Motor neuron (in vitro differentiated cells): ENCODE measurements at regions of chr17 and their contacts with region 1.

Region 1: GRCh38 chr17:61426013-61426730 is 26.1 kb upstream of the TBX4 start:
- ATAC-seq: peak in 3 of 8 experiments; percentile 37 to 69 (median 57)
- H3K4me3 ChIP-seq: no peak overlapping the region
- H3K27ac ChIP-seq: no peak overlapping the region
- H3K4me1 ChIP-seq: no peaks in the 10 kb centered on the region

Region 2: DNA sequence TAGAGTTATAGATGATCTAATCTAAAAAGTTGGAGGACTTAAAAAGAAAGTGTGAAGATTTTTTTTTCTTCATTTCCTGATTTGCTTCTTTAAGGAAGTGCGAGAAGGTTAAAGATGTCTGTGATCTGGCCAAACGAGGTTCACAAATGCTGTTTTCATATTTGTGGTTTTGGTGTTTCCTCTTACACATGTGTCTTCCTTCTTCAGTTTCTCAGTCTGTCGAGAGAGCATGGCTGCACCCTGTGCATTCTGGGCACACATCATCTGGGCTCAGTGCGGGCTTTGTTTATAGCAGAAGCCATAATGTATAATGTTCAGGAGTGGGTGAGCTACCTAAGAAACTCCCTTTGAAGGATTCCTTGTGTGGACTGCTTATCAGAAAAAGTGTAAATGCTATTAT is 287.0 kb before region 1 on chr17:
- in situ Hi-C with region 1: no loop called
- ATAC-seq: peak in 2 of 8 experiments; percentile 34 to 38
- H3K4me3 ChIP-seq: no peak overlapping the region
- H3K27ac ChIP-seq: no peak overlapping the region
- H3K4me1 ChIP-seq: no peaks in the 10 kb centered on the region

Region 3: DNA sequence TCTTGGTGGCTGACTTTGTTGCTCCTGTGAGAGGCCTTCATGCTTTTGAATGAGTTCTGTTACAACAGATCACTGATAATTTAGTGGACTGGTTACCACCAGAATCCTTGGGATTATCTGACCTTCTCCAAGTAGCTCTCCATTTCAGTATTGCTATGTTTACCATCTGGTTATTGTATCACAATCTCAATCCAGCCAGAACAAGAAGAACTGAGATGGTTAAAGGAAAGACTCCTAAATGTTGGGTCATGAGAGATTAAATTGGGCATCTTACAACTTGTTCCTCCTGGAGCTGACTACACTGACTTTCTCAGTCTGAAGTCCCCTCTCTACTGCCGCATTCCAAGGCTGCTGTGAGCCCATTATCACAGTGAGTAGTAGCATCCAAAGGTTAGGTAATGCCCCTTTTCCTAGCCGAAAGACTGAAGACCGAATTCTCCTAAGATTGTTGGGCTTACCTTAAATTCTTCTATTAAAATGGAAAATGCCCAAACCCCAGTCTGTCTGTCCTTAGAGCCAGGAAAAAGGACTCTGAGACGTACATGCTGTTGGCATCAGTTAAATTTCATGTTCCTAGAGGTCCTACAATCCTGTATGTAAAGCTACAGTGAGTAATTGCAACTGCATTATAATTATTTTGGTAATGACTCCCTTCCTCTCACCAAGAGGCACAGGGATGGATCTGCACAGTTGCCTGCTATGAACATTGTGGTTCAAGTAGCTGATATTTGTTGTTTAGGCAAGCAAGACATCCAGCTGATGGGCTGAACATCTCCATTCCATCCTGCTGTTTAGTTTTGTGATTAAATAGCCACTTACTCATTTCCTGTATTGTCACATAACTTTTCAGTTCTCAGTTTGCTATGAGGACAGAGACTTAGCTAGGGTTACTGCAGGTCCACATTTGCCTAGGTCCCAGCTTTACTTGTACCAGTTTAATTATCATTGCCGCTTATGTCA is 208.0 kb before region 1 on chr17:
- in situ Hi-C with region 1: no loop called
- ATAC-seq: no peak
- H3K4me3 ChIP-seq: no peak overlapping the region
- H3K27ac ChIP-seq: no peak overlapping the region
- H3K4me1 ChIP-seq: no peaks in the 10 kb centered on the region

Region 4: GRCh38 chr17:61536436-61536955 is 110.3 kb after region 1 on chr17:
- in situ Hi-C with region 1: loop called in 1 of 9 experiments (anchors 25 kb)
- ATAC-seq: peak in 3 of 8 experiments; percentile 38 to 73 (median 42)
- H3K4me3 ChIP-seq: no peak overlapping the region
- H3K27ac ChIP-seq: no peak overlapping the region
- H3K4me1 ChIP-seq: no peaks in the 10 kb centered on the region

Region 5: DNA sequence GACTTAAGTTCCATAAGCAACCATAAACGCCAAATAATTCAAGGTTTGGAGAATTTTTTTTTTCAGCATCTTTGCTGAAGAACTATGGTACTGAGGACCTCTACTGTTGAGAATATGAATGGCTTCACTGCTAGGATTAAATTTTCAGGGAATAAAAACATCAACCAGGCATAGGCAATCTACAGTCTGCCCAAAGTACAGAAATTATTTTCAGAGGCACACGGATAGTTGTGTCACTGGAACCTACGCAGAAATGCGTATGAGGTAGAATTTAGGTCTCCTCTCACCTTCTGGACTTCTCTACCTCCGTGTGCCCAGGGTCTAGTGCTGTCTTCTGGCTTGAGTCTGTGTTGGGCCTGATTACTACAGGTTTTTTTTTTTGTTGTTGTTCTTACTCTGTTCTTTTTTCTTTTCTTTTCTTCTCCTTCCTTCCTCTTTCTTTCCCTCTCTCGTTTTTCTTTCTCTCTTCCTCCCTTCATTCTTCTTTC is 125.1 kb after region 1 on chr17:
- in situ Hi-C with region 1: loop called in 2 of 9 experiments (anchors 25 kb)
- ATAC-seq: peak in 3 of 8 experiments; percentile 22 to 62 (median 48)
- H3K4me3 ChIP-seq: no peak overlapping the region
- H3K27ac ChIP-seq: no peak overlapping the region
- H3K4me1 ChIP-seq: no peaks in the 10 kb centered on the region

Region 6: GRCh38 chr17:61574542-61575174 is 148.5 kb after region 1 on chr17:
- in situ Hi-C with region 1: loop called in 2 of 9 experiments (anchors 10 to 25 kb)
- ATAC-seq: peak in 4 of 8 experiments; percentile 56 to 92 (median 76)
- H3K4me3 ChIP-seq: no peak overlapping the region
- H3K27ac ChIP-seq: no peak overlapping the region
- H3K4me1 ChIP-seq: no peaks in the 10 kb centered on the region

Region 7: DNA sequence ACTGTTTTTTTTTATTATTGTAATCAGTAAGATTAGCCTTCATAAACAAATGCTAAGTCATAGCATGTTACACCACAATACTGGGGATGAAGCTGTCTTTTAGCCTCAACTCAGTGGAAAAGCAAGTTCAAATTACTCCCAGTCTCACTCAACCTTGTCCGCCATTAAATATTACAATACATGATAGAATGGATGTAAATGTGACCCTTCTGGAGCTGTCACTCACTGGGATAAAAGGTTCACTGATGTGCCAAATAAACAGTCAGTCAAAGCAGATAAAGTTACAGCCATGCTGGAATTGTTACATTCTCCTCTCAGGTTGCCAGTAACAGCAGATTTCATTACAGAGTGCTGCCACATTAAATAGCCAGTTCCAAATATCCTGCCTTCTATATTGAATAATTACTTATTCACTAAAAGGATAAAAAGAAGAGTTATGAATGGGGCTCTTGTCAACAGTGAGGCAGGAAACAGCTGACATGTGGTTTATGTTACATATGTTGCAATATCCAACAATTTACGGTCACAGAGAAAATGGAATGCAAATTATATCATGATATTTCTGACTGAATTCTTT is 383.7 kb after region 1 on chr17:
- in situ Hi-C with region 1: loop called in 1 of 9 experiments (anchors 25 kb)
- ATAC-seq: peak in 4 of 8 experiments; percentile 10 to 96 (median 60)
- H3K4me3 ChIP-seq: no peak overlapping the region
- H3K27ac ChIP-seq: no peak overlapping the region
- H3K4me1 ChIP-seq: peaks cover 0 to 3% of the 10 kb centered on the region in 2 donors